Naive thymus-derived CD4-positive, alpha-beta T cell (primary cell): ENCODE measurements at regions of chr1 and their contacts with region 1.

Region 1: GRCh38 chr1:99707535-99708142 is 58.8 kb downstream of the FRRS1 start:
- DNase-seq: peak in 6 of 9 donors; percentile 7 to 46 (median 16)
- ATAC-seq: peak; percentile 75
- H3K4me3 ChIP-seq: no peak overlapping the region
- H3K4me3 Mint-ChIP-seq: no peak overlapping the region
- H3K27ac ChIP-seq: no peak overlapping the region
- H3K27ac Mint-ChIP-seq: no peak overlapping the region
- H3K4me1 ChIP-seq: peaks cover 0 to 7% of the 10 kb centered on the region in 2 donors
- H3K4me1 Mint-ChIP-seq: peaks cover 5 to 22% (median 10%) of the 10 kb centered on the region in 7 donors
- H3K27me3 ChIP-seq: no peaks in the 10 kb centered on the region
- H3K27me3 Mint-ChIP-seq: peaks cover 0 to 3% (median 0%) of the 10 kb centered on the region in 5 donors

Region 2: GRCh38 chr1:98991127-98992012 is 716.3 kb before region 1 on chr1:
- CTCF ChIA-PET with region 1: no interaction called
- POLR2A ChIA-PET with region 1: no interaction called
- intact Hi-C with region 1: loop called in 1 of 2 experiments (anchors 10 kb)
- DNase-seq: no peak
- ATAC-seq: no peak
- H3K4me3 ChIP-seq: no peak overlapping the region
- H3K4me3 Mint-ChIP-seq: no peak overlapping the region
- H3K27ac ChIP-seq: no peak overlapping the region
- H3K27ac Mint-ChIP-seq: peak overlapping the region in 3 of 9 donors; percentile 34 to 42 (median 39)
- H3K4me1 ChIP-seq: no peaks in the 10 kb centered on the region
- H3K4me1 Mint-ChIP-seq: peaks cover 0 to 9% (median 8%) of the 10 kb centered on the region in 7 donors
- H3K27me3 ChIP-seq: no peaks in the 10 kb centered on the region
- H3K27me3 Mint-ChIP-seq: peaks cover 0 to 4% (median 0%) of the 10 kb centered on the region in 5 donors

Region 3: GRCh38 chr1:99180343-99180808 is 527.3 kb before region 1 on chr1:
- CTCF ChIA-PET with region 1: no interaction called
- POLR2A ChIA-PET with region 1: no interaction called
- intact Hi-C with region 1: loop called (anchors 1 kb)
- DNase-seq: peak in 8 of 9 donors; percentile 17 to 65 (median 51)
- ATAC-seq: peak; percentile 82
- H3K4me3 ChIP-seq: no peak overlapping the region
- H3K4me3 Mint-ChIP-seq: no peak overlapping the region
- H3K27ac ChIP-seq: no peak overlapping the region
- H3K27ac Mint-ChIP-seq: no peak overlapping the region
- H3K4me1 ChIP-seq: no peaks in the 10 kb centered on the region
- H3K4me1 Mint-ChIP-seq: no peaks in the 10 kb centered on the region
- H3K27me3 ChIP-seq: no peaks in the 10 kb centered on the region
- H3K27me3 Mint-ChIP-seq: peaks cover 0 to 6% (median 0%) of the 10 kb centered on the region in 5 donors

Region 4: DNA sequence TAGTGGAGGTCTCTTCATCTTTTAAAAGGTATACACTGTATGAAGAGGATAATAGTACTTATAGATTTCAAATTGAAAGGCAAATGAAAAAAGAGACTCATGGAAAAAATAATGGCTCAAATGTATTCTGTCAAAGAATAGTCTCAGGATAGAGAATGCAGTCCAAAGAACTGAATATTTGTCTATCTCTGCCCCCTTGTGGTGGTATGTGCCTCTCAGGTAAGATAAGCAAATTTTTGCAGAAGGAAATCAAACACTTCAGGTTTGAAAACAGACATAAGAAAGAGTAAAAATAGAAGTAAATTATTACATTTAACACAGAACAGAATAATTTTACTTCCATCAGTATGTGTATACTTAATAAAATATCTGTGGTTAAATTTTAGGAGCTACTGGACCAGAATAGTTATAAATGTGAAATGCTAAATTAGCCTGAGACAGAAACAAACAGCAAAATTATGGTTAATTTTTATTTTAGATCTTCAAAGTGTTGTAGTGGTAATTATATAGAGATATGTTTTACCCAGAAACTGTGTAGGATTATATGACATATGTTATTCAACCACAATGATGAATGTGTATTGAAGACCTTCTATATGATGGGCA is 226.1 kb before region 1 on chr1:
- CTCF ChIA-PET with region 1: no interaction called
- POLR2A ChIA-PET with region 1: no interaction called
- intact Hi-C with region 1: loop called in 1 of 2 experiments (anchors 5 kb)
- DNase-seq: peak in 7 of 9 donors; percentile 6 to 61 (median 47)
- ATAC-seq: peak; percentile 59
- H3K4me3 ChIP-seq: no peak overlapping the region
- H3K4me3 Mint-ChIP-seq: no peak overlapping the region
- H3K27ac ChIP-seq: no peak overlapping the region
- H3K27ac Mint-ChIP-seq: no peak overlapping the region
- H3K4me1 ChIP-seq: no peaks in the 10 kb centered on the region
- H3K4me1 Mint-ChIP-seq: no peaks in the 10 kb centered on the region
- H3K27me3 ChIP-seq: no peaks in the 10 kb centered on the region
- H3K27me3 Mint-ChIP-seq: peaks cover 8 to 35% (median 17%) of the 10 kb centered on the region in 5 donors

Region 5: GRCh38 chr1:100699744-100700143 is 992.1 kb after region 1 on chr1:
- CTCF ChIA-PET with region 1: no interaction called
- POLR2A ChIA-PET with region 1: no interaction called
- intact Hi-C with region 1: no loop called
- DNase-seq: no peak
- ATAC-seq: no peak
- H3K4me3 ChIP-seq: no peak overlapping the region
- H3K4me3 Mint-ChIP-seq: no peak overlapping the region
- H3K27ac ChIP-seq: no peak overlapping the region
- H3K27ac Mint-ChIP-seq: no peak overlapping the region
- H3K4me1 ChIP-seq: no peaks in the 10 kb centered on the region
- H3K4me1 Mint-ChIP-seq: peaks cover 0 to 1% (median 0%) of the 10 kb centered on the region in 7 donors
- H3K27me3 ChIP-seq: no peaks in the 10 kb centered on the region
- H3K27me3 Mint-ChIP-seq: peaks cover 5 to 51% (median 29%) of the 10 kb centered on the region in 5 donors